Endothelial cell of umbilical vein (primary cell): ENCODE measurements at regions of chr19 and their contacts with region 1.

Region 1: GRCh38 chr19:7293795-7294570 is at the start of gene INSR:
- DNase-seq: peak; percentile 90
- H3K4me3 ChIP-seq: peak within 1 kb of the TSS; percentile 42 to 55 (median 50)
- H3K27ac ChIP-seq: peak within 1 kb of the TSS; percentile 14
- H3K4me1 ChIP-seq: peaks cover 3% of the 10 kb centered on the region
- H3K27me3 ChIP-seq: no peaks in the 10 kb centered on the region
- CTCF ChIP-seq: no peak
- POLR2A ChIP-seq: no peak
- total RNA-seq, gene INSR: 19.5 and 20.8 TPM in 2 replicates

Region 2: DNA sequence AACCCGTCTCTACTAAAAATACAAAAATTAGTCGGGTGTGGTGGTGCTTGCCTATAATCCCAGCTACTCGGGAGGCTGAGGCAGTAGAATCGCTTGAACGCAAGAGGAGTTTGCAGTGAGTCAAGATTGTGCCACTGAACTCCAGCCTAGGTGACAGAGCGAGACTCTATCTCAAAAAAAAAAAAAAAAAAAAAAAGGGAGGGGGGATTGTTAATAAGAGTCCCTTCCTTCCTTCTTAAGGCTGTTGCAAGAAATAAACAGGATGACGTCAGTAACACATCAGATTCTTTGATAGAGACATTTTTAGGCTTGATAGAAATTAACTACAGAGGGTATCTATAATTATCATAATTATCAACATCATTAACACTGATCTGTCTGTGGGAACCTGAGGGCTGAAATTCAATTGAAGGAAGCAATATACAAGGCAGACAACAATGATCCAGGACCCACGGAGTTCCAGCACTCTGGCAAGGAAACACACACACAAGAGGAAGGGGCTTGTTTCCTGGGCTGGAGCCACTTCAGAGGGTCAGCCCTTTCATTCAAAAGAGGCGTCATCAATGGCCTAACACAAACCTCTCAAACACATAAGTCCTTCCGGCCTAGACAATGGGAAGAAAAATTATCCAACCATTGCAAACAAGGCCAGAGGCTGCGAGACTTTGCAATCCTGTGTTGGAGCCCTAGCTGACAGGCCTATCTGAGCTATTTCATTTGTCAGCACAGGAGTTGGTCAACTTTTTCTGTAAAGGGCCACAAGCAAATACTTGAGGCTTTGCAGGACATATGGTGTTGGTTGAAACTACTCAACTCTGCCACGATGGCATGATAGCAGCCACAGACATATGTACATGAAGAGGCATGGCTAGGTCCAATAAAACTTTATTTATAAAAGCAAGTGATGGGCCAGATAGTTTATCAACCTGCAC is 105.0 kb before region 1 on chr19:
- CTCF ChIA-PET with region 1: no interaction called
- POLR2A ChIA-PET with region 1: no interaction called
- dilution Hi-C with region 1: no loop called
- intact Hi-C with region 1: loop called (anchors 2 kb)
- DNase-seq: peak; percentile 96
- H3K4me3 ChIP-seq: no peak overlapping the region
- H3K27ac ChIP-seq: peak overlapping the region; percentile 73
- H3K4me1 ChIP-seq: peaks cover 19% of the 10 kb centered on the region
- H3K27me3 ChIP-seq: peaks cover 0 to 2% of the 10 kb centered on the region in 2 experiments
- CTCF ChIP-seq: no peak
- POLR2A ChIP-seq: no peak

Region 3: GRCh38 chr19:7852851-7853769 is 559.1 kb after region 1 on chr19:
- CTCF ChIA-PET with region 1: no interaction called
- POLR2A ChIA-PET with region 1: no interaction called
- dilution Hi-C with region 1: no loop called
- intact Hi-C with region 1: no loop called
- DNase-seq: peak; percentile 49
- H3K4me3 ChIP-seq: no peak overlapping the region
- H3K27ac ChIP-seq: no peak overlapping the region
- H3K4me1 ChIP-seq: no peaks in the 10 kb centered on the region
- H3K27me3 ChIP-seq: no peaks in the 10 kb centered on the region
- CTCF ChIP-seq: peak; percentile 63 to 92
- POLR2A ChIP-seq: no peak